Lower leg skin (tissue), 4 donors: ENCODE measurements at regions of chr6 and their contacts with region 1.

Region 1: GRCh38 chr6:15065261-15065989 is 180.4 kb upstream of the JARID2 start:
- DNase-seq: no peak
- H3K4me3 ChIP-seq: no peak overlapping the region
- CTCF ChIP-seq: no peak
- POLR2A ChIP-seq: no peak

Region 2: GRCh38 chr6:16486661-16487060 is 1421.2 kb after region 1 on chr6:
- intact Hi-C with region 1: loop called (anchors 5 kb)
- DNase-seq: no peak
- H3K4me3 ChIP-seq: no peak overlapping the region
- CTCF ChIP-seq: no peak
- POLR2A ChIP-seq: no peak